Cardiac septum (tissue), 1 donor: ENCODE measurements at regions of chr3 and their contacts with region 1.

Region 1: GRCh38 chr3:45170096-45170495 is 23.9 kb upstream of the CDCP1 start:
- DNase-seq: no peak

Region 2: GRCh38 chr3:45109771-45110508 is 60.2 kb before region 1 on chr3:
- intact Hi-C with region 1: loop called (anchors 5 kb)
- DNase-seq: no peak

Region 3: GRCh38 chr3:45123030-45123429 is 47.1 kb before region 1 on chr3:
- intact Hi-C with region 1: no loop called
- DNase-seq: no peak